Calu3 (cell line): ENCODE measurements at regions of chr6 and their contacts with region 1.

Region 1: GRCh38 chr6:54717849-54718455 is 128.6 kb upstream of the FAM83B start:
- DNase-seq: peak; percentile 83
- H3K4me3 Mint-ChIP-seq: peak overlapping the region; percentile 63
- H3K27ac Mint-ChIP-seq: peak overlapping the region; percentile 83
- H3K4me1 Mint-ChIP-seq: peaks cover 56% of the 10 kb centered on the region
- H3K27me3 Mint-ChIP-seq: no peaks in the 10 kb centered on the region
- CTCF ChIP-seq: peak; percentile 80

Region 2: GRCh38 chr6:54053881-54054391 is 664.0 kb before region 1 on chr6:
- CTCF ChIA-PET with region 1: no interaction called
- intact Hi-C with region 1: no loop called
- DNase-seq: peak; percentile 39
- H3K4me3 Mint-ChIP-seq: peak overlapping the region; percentile 19
- H3K27ac Mint-ChIP-seq: no peak overlapping the region
- H3K4me1 Mint-ChIP-seq: no peaks in the 10 kb centered on the region
- H3K27me3 Mint-ChIP-seq: no peaks in the 10 kb centered on the region
- CTCF ChIP-seq: no peak

Region 3: GRCh38 chr6:54730767-54731630 is 13.0 kb after region 1 on chr6:
- CTCF ChIA-PET with region 1: interaction called, 8 read pairs
- intact Hi-C with region 1: loop called (anchors 1 kb)
- DNase-seq: peak; percentile 68
- H3K4me3 Mint-ChIP-seq: peak overlapping the region; percentile 2
- H3K27ac Mint-ChIP-seq: peak overlapping the region; percentile 74
- H3K4me1 Mint-ChIP-seq: peaks cover 32% of the 10 kb centered on the region
- H3K27me3 Mint-ChIP-seq: no peaks in the 10 kb centered on the region
- CTCF ChIP-seq: no peak

Region 4: GRCh38 chr6:54846243-54846856 is 128.4 kb after region 1 on chr6 and contains the start of gene FAM83B:
- CTCF ChIA-PET with region 1: interaction called, 13 read pairs
- intact Hi-C with region 1: loop called (anchors 2 kb)
- DNase-seq: peak; percentile 82
- H3K4me3 Mint-ChIP-seq: peak within 1 kb of the TSS; percentile 95
- H3K27ac Mint-ChIP-seq: peak within 1 kb of the TSS; percentile 78
- H3K4me1 Mint-ChIP-seq: peaks cover 44% of the 10 kb centered on the region
- H3K27me3 Mint-ChIP-seq: no peaks in the 10 kb centered on the region
- CTCF ChIP-seq: no peak
- total RNA-seq, gene FAM83B: 22.2 and 24.2 TPM in 2 replicates

Region 5: DNA sequence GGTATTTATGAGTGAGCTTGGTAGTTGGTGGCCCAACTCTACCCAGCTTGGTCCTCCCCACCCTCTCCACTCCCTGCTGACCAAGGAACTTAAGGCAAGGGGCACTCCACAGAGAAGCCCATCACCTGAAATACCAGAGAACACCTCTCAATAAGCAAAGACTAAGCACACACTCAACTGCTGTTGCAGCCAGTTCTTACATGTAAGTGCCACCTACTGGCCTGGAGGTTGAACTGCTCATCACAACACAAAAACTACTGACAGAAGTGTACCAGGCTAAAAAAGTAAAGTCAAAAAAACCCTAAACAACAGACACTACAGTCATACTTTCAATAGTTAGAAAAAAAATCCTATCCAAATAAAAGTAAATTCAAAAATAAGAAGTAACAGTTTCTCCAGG is 274.8 kb after region 1 on chr6:
- CTCF ChIA-PET with region 1: interaction called, 5 read pairs
- intact Hi-C with region 1: loop called (anchors 5 kb)
- DNase-seq: no peak
- H3K4me3 Mint-ChIP-seq: no peak overlapping the region
- H3K27ac Mint-ChIP-seq: no peak overlapping the region
- H3K4me1 Mint-ChIP-seq: peaks cover 17% of the 10 kb centered on the region
- H3K27me3 Mint-ChIP-seq: no peaks in the 10 kb centered on the region
- CTCF ChIP-seq: peak; percentile 55

Region 6: DNA sequence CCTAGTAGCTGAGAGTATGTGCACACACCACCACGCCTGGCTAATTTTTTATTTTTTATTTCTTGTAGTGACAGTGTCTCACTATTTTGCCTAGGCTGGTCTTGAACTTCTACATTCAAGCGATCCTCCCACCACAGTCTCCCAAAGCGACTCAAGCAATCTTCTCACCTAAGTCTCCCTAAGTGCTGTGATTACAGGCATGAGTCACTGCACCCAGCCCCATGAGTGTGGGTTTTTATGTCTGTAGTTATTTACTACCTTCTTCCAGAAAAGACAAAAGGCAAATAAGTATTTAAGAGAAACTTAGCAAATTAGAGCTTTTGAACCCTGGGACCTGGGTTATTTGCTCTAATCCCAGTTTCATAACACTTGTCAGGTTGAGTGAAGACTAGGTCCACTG is 364.1 kb after region 1 on chr6:
- CTCF ChIA-PET with region 1: no interaction called
- intact Hi-C with region 1: no loop called
- DNase-seq: no peak
- H3K4me3 Mint-ChIP-seq: no peak overlapping the region
- H3K27ac Mint-ChIP-seq: no peak overlapping the region
- H3K4me1 Mint-ChIP-seq: no peaks in the 10 kb centered on the region
- H3K27me3 Mint-ChIP-seq: no peaks in the 10 kb centered on the region
- CTCF ChIP-seq: no peak